ENCODE measurements at regions of chr17 and their contacts with region 1.

Region 1: DNA sequence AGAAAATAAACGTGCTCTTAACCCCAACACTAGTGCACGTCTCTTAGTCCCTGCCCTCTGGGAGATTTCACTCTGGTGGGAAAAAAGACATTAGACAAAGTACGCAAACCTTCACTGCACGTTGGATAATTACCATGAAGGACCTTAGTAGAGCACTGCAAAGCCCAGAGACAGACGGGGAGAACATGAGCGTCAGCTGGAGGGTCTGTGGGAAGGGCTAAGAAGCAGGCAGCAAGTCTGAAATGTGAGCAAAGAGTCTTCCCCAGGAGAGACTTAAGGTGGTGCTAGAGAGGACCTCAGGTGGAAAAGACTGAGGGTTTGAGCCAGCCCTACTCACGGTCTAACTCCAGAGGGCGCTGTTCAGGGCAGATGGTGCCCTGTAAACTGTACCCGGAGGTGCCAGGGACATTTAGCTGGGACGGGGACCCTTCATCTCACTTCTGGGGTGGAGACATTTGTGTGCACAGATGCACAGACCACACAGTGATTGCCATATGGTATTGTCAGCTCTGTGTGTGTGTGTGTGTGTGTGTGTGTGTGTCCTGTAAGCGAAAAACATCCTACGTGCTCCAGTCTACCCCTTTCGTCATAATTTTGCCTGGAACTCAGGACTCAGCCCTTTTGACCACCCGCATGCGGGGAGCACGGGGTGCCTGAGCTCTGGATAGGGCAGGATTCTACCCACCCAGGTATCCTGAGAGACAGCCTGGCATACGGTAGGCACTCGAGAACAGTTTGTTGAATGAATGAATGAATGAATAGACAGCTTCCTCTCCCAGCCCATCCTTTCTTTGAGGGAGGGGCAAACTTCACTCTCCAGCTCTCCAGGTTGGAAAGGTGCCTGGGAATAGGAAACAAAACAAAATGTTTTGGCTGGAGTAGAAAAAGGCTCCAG is 10.1 kb upstream of the STAC2 start:
- DNase-seq: peak; percentile 80

Region 2: GRCh38 chr17:39164675-39165143 is 71.1 kb before region 1 on chr17:
- CTCF ChIA-PET with region 1: interaction called, 11 read pairs
- POLR2A ChIA-PET with region 1: no interaction called
- DNase-seq: peak; percentile 80

Region 3: DNA sequence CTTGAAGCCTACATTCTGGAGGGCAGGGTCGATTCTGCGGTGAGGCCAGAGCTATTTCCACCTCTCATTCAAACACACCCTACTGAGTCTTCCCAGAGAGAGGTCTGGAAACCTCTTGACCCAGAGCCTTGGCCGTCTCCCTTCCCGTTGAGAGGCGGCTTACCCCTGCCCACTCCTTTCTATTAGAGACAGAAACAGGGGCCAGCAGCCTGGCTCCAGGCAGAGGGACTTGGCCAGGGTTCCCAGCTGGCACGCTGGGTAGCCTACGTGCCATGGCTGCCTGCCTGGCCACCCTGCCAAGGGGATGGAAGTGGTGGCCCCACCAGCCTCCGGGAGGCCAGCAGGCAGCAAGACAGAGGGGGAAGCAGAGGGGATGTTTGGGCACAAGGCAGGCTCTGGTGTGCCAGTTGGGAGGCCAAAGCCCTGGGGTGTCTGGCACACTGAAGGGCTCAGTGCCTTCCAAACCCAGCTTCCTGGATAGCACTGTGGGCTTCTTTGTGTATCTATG is 16.1 kb before region 1 on chr17:
- CTCF ChIA-PET with region 1: interaction called, 14 read pairs
- POLR2A ChIA-PET with region 1: interaction called, 4 read pairs
- DNase-seq: no peak